Activated CD4-positive, alpha-beta memory T cell treated with anti-CD3 and anti-CD28 coated beads, Interleukin-2, amount 10 ng/mL, durations not matched to agents 7 days and 5 days (primary cell): ENCODE measurements at regions of chr1 and their contacts with region 1.

Region 1: DNA sequence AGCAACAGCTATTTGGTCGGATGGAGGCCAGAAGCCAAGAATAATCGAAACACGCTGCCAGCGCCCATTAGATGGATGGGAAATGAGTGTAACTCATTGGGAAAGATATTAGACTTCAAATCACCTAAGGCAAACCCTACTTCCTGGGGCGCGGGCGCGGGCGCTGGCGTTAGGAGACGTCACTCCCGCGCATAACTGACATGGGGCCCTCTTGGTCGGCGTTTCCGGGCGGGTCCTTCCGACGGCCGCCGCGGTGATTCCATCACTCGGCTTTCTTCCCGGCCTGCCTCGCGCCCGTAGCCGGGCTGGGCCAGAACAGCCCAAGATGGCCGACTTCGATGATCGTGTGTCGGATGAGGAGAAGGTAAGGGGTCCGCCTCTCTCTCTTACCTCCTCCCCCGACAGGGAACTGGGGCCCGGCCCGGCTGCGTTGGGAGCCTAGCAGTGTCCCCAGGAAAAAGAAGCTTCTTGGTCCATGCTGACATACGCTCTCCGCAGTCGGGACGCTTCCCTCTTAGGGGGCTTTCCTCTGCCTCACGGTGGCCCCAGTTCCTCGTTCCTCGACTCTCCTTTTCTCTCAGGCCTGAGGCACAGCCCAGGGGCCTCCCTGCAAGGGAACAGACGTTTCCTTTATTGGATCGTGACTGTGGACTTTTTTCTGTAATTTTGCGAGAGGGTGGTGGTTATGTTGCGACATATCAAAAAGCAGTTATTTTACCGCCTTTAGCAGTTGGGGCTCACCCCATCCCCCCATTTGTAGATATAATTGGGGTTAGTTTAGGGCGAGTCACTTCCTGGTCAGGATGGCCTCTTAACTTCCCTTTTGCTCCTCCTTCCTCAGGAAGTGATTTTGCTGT is at the start of gene CAPZA1:
- DNase-seq: peak; percentile 95
- H3K4me3 Mint-ChIP-seq: peak within 1 kb of the TSS; percentile 96
- H3K27ac Mint-ChIP-seq: peak within 1 kb of the TSS; percentile 99
- H3K4me1 Mint-ChIP-seq: peaks cover 32% of the 10 kb centered on the region
- H3K27me3 Mint-ChIP-seq: no peaks in the 10 kb centered on the region
- total RNA-seq, gene CAPZA1: 340 to 342 TPM

Region 2: GRCh38 chr1:112390775-112391602 is 228.8 kb before region 1 on chr1:
- CTCF ChIA-PET with region 1: interaction called, 36 read pairs
- POLR2A ChIA-PET with region 1: interaction called, 24 read pairs
- DNase-seq: peak; percentile 86
- H3K4me3 Mint-ChIP-seq: peak overlapping the region; percentile 62
- H3K27ac Mint-ChIP-seq: peak overlapping the region; percentile 6
- H3K4me1 Mint-ChIP-seq: peaks cover 42% of the 10 kb centered on the region
- H3K27me3 Mint-ChIP-seq: peaks cover 7% of the 10 kb centered on the region

Region 3: DNA sequence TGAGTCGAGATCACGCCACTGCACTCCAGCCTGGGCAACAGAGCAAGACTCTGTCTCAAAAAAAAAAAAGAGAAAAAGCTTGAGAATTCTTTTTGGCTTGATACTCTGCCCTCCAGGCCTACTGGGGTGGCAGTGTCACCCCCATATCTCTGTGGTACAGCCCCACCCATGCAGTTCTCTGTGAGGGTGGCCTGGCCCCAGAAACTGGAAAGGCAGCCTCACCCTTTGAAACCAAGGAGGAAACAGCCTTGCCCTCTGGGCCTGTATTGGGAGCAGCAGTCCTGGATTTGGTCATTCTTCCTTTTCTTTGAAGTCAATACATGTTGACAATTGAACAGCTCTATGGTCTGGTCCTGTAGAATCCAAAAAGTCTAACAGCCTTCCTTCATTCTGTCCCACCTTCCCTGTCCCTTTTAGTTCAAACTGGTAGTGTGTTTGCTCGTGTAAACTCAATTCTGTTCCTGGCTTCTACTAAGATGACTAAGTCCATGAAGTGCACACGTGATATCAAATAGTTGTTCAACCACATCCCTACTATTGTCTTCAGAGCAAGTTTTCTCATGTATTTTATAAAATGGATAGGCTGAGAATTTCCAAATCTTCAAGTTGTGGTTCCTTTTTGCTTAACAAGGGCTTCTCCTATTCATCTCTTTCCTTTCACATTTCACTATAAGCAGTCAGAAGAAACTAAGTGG is 14.0 kb before region 1 on chr1:
- CTCF ChIA-PET with region 1: interaction called, 3 read pairs
- POLR2A ChIA-PET with region 1: interaction called, 46 read pairs
- DNase-seq: no peak
- H3K4me3 Mint-ChIP-seq: no peak overlapping the region
- H3K27ac Mint-ChIP-seq: peak overlapping the region; percentile 5
- H3K4me1 Mint-ChIP-seq: peaks cover 14% of the 10 kb centered on the region
- H3K27me3 Mint-ChIP-seq: no peaks in the 10 kb centered on the region

Region 4: DNA sequence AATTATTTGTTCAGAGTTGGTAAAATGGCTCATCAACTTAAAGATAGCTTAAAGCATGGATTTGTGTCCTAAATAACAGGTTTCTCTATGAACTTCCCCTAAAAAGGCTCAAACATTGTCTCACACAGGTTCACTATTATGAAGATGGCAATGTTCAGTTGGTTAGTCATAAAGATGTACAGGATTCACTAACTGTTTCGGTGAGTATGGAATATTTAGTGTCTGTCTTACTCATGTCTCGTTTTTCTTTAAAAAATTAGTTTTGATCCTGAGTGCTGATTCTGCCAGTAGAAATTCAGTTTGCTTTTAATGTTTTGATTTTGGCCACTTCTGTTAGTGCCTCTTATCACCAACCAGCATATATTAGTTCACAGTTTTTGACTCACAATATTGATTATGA is 47.2 kb after region 1 on chr1:
- CTCF ChIA-PET with region 1: interaction called, 4 read pairs
- POLR2A ChIA-PET with region 1: interaction called, 101 read pairs
- DNase-seq: no peak
- H3K4me3 Mint-ChIP-seq: no peak overlapping the region
- H3K27ac Mint-ChIP-seq: peak overlapping the region; percentile 62
- H3K4me1 Mint-ChIP-seq: peaks cover 38% of the 10 kb centered on the region
- H3K27me3 Mint-ChIP-seq: no peaks in the 10 kb centered on the region

Region 5: GRCh38 chr1:112706908-112707663 is 87.3 kb after region 1 on chr1 and contains the start of gene RHOC:
- CTCF ChIA-PET with region 1: no interaction called
- POLR2A ChIA-PET with region 1: interaction called, 57 read pairs
- DNase-seq: peak; percentile 69
- H3K4me3 Mint-ChIP-seq: peak within 1 kb of the TSS; percentile 73
- H3K27ac Mint-ChIP-seq: peak within 1 kb of the TSS; percentile 89
- H3K4me1 Mint-ChIP-seq: peaks cover 49% of the 10 kb centered on the region
- H3K27me3 Mint-ChIP-seq: peaks cover 37% of the 10 kb centered on the region
- total RNA-seq, gene RHOC: 87.1 to 92.4 TPM

Region 6: GRCh38 chr1:112955781-112956543 is 336.2 kb after region 1 on chr1 and contains the start of gene SLC16A1:
- CTCF ChIA-PET with region 1: no interaction called
- POLR2A ChIA-PET with region 1: interaction called, 10 read pairs
- DNase-seq: peak; percentile 90
- H3K4me3 Mint-ChIP-seq: peak within 1 kb of the TSS; percentile 81
- H3K27ac Mint-ChIP-seq: peak within 1 kb of the TSS; percentile 99
- H3K4me1 Mint-ChIP-seq: peaks cover 56% of the 10 kb centered on the region
- H3K27me3 Mint-ChIP-seq: no peaks in the 10 kb centered on the region
- total RNA-seq, gene SLC16A1: 59.0 to 61.4 TPM